Activated CD4-positive, alpha-beta T cell treated with anti-CD3 and anti-CD28 coated beads for 36 hours (primary cell): ENCODE measurements at regions of chr13 and their contacts with region 1.

Region 1: DNA sequence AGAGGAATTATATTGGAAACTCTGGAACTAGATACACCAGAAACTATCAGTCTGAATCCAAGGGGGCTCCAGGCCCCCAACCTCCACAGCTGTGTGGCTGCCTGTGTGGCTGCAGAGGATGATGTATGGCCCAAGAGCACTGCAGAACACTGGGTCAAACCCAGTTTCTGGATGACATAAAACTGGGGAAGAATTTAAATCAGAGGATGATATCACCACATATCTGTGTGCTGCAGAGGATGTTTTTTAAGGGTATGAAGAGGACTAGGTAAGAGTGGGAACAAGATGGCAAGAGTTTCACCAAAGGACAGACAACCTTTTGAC is 226.4 kb downstream of the SUCLA2 start:
- DNase-seq: no peak
- ATAC-seq: no peak
- H3K4me3 Mint-ChIP-seq: no peak overlapping the region
- H3K27ac Mint-ChIP-seq: no peak overlapping the region
- H3K4me1 Mint-ChIP-seq: no peaks in the 10 kb centered on the region
- H3K27me3 Mint-ChIP-seq: peaks cover 2% of the 10 kb centered on the region

Region 2: GRCh38 chr13:46893798-46894560 is 880.7 kb before region 1 on chr13:
- CTCF ChIA-PET with region 1: no interaction called
- POLR2A ChIA-PET with region 1: no interaction called
- intact Hi-C with region 1: loop called in 1 of 2 experiments (anchors 1 kb)
- DNase-seq: peak; percentile 83
- ATAC-seq: peak; percentile 95
- H3K4me3 Mint-ChIP-seq: peak overlapping the region; percentile 60
- H3K27ac Mint-ChIP-seq: no peak overlapping the region
- H3K4me1 Mint-ChIP-seq: peaks cover 11% of the 10 kb centered on the region
- H3K27me3 Mint-ChIP-seq: peaks cover 48% of the 10 kb centered on the region

Region 3: DNA sequence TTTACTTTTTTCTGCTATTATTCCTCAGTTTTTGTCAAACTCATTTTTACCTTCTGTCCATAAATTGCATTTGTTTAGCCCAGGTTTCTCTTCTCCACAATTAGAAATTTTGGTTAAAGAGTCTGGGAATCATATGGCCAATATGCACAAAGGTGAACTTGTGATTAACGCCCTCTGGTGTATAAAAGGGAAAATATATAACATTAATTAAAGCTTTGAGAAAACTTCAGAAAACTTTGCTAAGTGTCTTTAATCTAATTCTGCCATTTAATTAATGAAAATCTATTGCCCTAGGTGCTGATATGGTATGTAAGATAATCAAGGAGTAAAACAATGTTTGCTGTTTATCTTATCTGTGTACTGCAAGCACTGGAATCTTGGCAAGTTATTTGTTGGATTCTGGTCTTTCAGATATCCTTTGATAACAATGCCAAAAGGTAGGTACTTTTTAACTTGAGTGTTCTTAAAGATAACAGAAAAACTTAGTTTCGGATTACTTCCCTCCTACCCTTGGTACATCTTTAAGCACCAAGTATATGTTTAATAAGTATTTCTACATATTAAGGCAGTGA is 176.2 kb before region 1 on chr13:
- CTCF ChIA-PET with region 1: interaction called, 5 read pairs
- POLR2A ChIA-PET with region 1: no interaction called
- intact Hi-C with region 1: loop called in 1 of 2 experiments (anchors 1 kb)
- DNase-seq: no peak
- ATAC-seq: no peak
- H3K4me3 Mint-ChIP-seq: no peak overlapping the region
- H3K27ac Mint-ChIP-seq: no peak overlapping the region
- H3K4me1 Mint-ChIP-seq: no peaks in the 10 kb centered on the region
- H3K27me3 Mint-ChIP-seq: peaks cover 5% of the 10 kb centered on the region